PC-9 (cell line): ENCODE measurements at regions of chr10 and their contacts with region 1.

Region 1: DNA sequence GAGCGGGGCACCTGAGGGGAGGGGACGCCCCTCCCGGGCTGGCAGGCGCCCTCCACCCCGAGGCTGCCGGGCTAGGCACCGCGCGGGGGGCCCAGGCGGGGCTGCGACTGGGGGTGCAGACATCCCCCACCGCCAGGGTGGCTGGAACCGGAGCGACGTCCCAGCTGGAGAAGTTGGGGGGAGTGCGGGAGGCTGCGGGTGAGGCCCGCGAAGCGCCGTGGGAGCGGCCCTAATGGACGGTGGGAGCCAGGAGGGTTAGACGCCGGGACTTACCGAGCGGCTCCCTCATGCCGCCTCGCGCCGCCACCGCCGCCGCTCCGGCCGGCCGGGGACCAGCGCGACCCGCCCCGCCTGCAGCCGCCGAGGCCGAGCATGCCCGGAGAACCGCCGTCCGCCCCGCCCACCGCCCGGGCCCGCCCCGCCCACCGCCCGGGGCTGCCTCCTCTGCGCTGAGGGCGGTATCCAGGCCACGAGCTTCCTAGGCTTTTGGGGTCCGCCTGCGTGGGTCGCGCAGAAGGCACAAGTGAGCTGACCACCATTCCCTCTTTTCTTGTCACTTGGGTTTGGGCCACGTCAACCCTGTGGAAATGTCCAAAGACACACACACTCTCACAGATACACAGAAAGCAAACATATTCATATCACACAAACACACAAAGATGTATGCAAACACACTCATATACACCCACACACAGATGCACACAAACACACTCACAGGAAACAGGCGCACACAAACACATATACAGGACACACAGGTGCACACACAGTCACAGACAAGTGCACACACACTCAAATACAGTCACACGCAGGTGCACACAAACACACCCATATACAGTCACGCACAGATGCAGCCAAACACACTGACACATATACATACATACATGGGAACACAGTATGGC is at the start of gene JCAD:
- DNase-seq: peak in 1 of 2 experiments; percentile 82
- H3K4me3 ChIP-seq: peak within 1 kb of the TSS; percentile 65
- H3K27ac ChIP-seq: peak within 1 kb of the TSS; percentile 72; the same call in 1 of the 2 replicates
- H3K4me1 ChIP-seq: peaks cover 37% of the 10 kb centered on the region
- H3K27me3 ChIP-seq: no peaks in the 10 kb centered on the region
- CTCF ChIP-seq: no peak
- total RNA-seq, gene JCAD: 30.5 and 36.7 TPM in 2 replicates

Region 2: GRCh38 chr10:30022590-30022989 is 36.9 kb before region 1 on chr10:
- CTCF ChIA-PET with region 1: no interaction called
- POLR2A ChIA-PET with region 1: no interaction called
- intact Hi-C with region 1: no loop called
- DNase-seq: no peak
- H3K4me3 ChIP-seq: no peak overlapping the region
- H3K27ac ChIP-seq: no peak overlapping the region
- H3K4me1 ChIP-seq: no peaks in the 10 kb centered on the region
- H3K27me3 ChIP-seq: no peaks in the 10 kb centered on the region
- CTCF ChIP-seq: no peak

Region 3: DNA sequence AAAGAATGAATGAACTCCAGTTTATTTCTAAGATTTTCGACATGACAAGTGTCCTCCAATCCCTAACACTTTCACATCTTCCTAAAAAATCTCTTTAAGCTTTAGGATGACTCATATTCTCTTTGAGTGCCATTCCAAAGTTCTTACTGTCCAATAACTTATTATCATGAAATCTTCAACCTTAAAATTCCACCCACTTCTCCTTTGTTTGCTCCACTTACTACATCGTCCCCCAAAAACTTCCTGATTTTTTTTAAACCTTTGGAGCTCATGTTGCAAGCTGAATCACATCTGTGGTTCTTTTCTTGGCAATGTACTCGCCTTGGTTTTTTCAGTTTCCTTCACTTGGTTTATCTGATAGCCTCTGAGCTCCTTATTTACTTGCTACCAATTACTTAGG is 39.2 kb after region 1 on chr10:
- CTCF ChIA-PET with region 1: no interaction called
- POLR2A ChIA-PET with region 1: no interaction called
- intact Hi-C with region 1: loop called (anchors 2 kb)
- DNase-seq: peak; percentile 38 to 92
- H3K4me3 ChIP-seq: no peak overlapping the region
- H3K27ac ChIP-seq: peak overlapping the region; percentile 77
- H3K4me1 ChIP-seq: peaks cover 43% of the 10 kb centered on the region
- H3K27me3 ChIP-seq: no peaks in the 10 kb centered on the region
- CTCF ChIP-seq: no peak

Region 4: DNA sequence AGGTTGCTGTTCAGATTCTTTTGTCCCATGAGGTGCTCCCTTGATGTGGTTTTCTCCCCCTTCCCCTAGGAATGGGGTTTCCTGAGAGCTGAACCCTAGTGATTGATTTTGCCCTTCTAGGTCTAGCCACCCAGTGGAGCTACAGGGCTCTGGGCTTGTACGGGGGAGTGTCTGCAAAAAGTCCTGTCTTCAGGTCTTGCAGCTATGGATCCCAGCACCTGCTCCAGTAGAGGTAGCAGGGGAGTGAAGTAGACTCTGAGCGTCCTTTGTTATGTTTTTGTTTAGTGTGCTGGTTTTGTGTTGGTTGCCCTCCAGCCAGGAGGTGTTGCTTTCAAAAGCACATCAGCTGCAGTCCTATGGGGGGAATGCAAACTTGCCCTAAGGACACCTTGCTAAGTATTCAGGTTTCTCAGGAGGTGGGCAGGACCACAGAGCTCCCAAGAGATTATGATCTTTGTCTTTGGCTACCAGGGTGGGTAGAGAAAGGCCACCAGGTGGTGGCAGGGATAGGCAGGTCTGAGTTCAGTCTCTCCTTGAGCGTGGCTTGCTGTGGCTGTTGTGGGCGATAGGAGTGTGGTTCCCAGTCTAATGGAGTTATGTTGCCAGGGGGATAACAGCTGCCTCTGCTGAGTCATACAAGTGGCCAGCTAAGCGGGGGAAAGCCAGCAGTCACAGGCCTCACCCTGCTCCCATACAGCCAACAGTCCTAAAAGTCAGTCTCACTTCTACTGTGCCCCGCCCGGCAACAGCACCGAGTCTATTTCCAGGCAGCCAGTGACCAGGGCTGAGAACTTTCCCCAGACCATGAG is 92.3 kb after region 1 on chr10:
- CTCF ChIA-PET with region 1: no interaction called
- POLR2A ChIA-PET with region 1: interaction called, 3 read pairs
- intact Hi-C with region 1: loop called (anchors 2 kb)
- DNase-seq: peak; percentile 80 to 84
- H3K4me3 ChIP-seq: no peak overlapping the region
- H3K27ac ChIP-seq: no peak overlapping the region
- H3K4me1 ChIP-seq: peaks cover 11% of the 10 kb centered on the region
- H3K27me3 ChIP-seq: no peaks in the 10 kb centered on the region
- CTCF ChIP-seq: no peak; the same call in 1 of the 2 replicates

Region 5: DNA sequence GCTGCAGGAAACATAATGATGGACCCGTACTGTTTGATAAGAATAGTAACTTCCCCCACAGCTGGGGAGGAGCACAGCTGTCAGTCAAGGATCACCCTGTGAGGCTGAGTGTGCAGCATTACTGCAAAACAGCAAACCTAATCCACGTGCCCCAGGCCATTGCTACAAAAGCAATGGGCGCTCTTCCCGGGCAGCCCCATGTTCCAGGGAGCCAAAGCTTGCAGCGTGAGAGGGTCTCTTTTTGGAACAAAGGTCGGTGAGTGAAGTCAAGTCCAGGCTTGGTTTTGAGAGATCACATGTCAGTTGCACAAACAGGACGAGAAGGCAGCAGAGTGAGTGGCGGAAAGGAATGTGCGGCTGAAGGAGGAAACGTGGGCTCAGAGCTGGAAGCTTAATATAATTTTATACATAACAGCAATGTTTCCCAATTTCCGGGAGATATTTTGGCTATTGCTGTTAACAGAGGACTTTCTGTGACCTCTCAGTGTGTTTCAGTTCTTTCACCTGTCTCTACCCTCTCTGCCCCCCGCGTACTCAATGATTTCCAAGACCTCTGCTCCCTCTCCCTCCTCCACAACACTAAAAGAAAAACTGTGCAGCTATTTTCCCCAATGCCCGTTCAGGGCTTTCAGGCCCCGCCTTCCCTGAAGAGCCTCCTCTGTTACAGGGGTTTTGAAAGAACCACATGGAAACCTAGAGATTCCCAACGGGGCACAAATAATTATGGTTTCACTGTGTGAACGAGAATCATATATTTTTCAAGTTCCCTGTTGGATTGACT is 160.7 kb after region 1 on chr10:
- CTCF ChIA-PET with region 1: no interaction called
- POLR2A ChIA-PET with region 1: no interaction called
- intact Hi-C with region 1: loop called (anchors 10 kb)
- DNase-seq: peak; percentile 46 to 82
- H3K4me3 ChIP-seq: peak overlapping the region; percentile 48; the same call in 1 of the 2 replicates
- H3K27ac ChIP-seq: peak overlapping the region; percentile 68
- H3K4me1 ChIP-seq: peaks cover 23% of the 10 kb centered on the region
- H3K27me3 ChIP-seq: no peaks in the 10 kb centered on the region
- CTCF ChIP-seq: no peak

Region 6: GRCh38 chr10:30231071-30231652 is 171.7 kb after region 1 on chr10:
- CTCF ChIA-PET with region 1: no interaction called
- POLR2A ChIA-PET with region 1: interaction called, 12 read pairs
- intact Hi-C with region 1: loop called (anchors 10 kb)
- DNase-seq: peak; percentile 38 to 79
- H3K4me3 ChIP-seq: no peak overlapping the region
- H3K27ac ChIP-seq: no peak overlapping the region
- H3K4me1 ChIP-seq: peaks cover 11% of the 10 kb centered on the region
- H3K27me3 ChIP-seq: no peaks in the 10 kb centered on the region
- CTCF ChIP-seq: no peak